Activated CD4-positive, alpha-beta memory T cell treated with anti-CD3 and anti-CD28 coated beads for 36 hours (primary cell): ENCODE measurements at regions of chr14 and their contacts with region 1.

Region 1: GRCh38 chr14:22200977-22201605 is 387.9 kb downstream of the DAD1 start:
- DNase-seq: no peak
- H3K4me3 Mint-ChIP-seq: no peak overlapping the region
- H3K27ac Mint-ChIP-seq: no peak overlapping the region
- H3K4me1 Mint-ChIP-seq: peaks cover 15% of the 10 kb centered on the region
- H3K27me3 Mint-ChIP-seq: no peaks in the 10 kb centered on the region

Region 2: GRCh38 chr14:21894003-21894897 is 306.8 kb before region 1 on chr14:
- CTCF ChIA-PET with region 1: no interaction called
- POLR2A ChIA-PET with region 1: no interaction called
- intact Hi-C with region 1: no loop called
- DNase-seq: peak; percentile 73
- H3K4me3 Mint-ChIP-seq: peak overlapping the region; percentile 80
- H3K27ac Mint-ChIP-seq: peak overlapping the region; percentile 89
- H3K4me1 Mint-ChIP-seq: peaks cover 25% of the 10 kb centered on the region
- H3K27me3 Mint-ChIP-seq: no peaks in the 10 kb centered on the region

Region 3: GRCh38 chr14:22147704-22148103 is 53.4 kb before region 1 on chr14:
- CTCF ChIA-PET with region 1: no interaction called
- POLR2A ChIA-PET with region 1: no interaction called
- intact Hi-C with region 1: no loop called
- DNase-seq: peak; percentile 18
- H3K4me3 Mint-ChIP-seq: peak overlapping the region; percentile 73
- H3K27ac Mint-ChIP-seq: peak overlapping the region; percentile 79
- H3K4me1 Mint-ChIP-seq: peaks cover 3% of the 10 kb centered on the region
- H3K27me3 Mint-ChIP-seq: no peaks in the 10 kb centered on the region

Region 4: DNA sequence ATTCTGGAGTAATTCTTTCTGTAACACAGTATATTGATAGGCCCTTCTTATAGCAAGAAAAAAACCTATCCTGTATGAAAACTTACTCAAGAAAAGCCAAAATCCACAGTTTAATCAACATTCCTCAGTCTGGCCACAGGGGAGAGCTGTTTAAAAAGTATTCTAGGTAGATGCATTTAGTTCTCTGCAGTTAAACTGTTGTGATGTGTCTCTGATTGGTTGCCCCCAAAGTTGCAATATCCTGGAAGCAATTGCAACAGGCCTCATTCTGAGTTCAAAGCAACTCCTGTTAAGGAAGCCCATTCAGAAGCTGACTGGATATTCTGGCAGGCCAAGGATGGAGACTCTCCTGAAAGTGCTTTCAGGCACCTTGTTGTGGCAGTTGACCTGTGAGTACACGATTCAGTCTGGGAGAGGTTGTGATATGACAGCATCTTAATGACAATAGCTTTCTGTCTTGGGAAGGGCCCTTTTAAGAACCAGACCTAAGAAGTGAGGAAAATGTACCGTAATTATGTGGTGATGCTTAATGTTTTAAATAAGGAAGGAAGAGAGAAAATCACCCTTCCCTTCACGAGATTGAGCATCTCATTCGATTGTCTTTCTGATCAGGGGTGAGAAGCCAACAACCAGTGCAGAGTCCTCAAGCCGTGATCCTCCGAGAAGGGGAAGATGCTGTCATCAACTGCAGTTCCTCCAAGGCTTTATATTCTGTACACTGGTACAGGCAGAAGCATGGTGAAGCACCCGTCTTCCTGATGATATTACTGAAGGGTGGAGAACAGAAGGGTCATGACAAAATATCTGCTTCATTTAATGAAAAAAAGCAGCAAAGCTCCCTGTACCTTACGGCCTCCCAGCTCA is 32.8 kb before region 1 on chr14:
- CTCF ChIA-PET with region 1: interaction called, 4 read pairs
- POLR2A ChIA-PET with region 1: no interaction called
- intact Hi-C with region 1: loop called (anchors 2 kb)
- DNase-seq: peak; percentile 15
- H3K4me3 Mint-ChIP-seq: peak overlapping the region; percentile 66
- H3K27ac Mint-ChIP-seq: peak overlapping the region; percentile 58
- H3K4me1 Mint-ChIP-seq: peaks cover 3% of the 10 kb centered on the region
- H3K27me3 Mint-ChIP-seq: no peaks in the 10 kb centered on the region

Region 5: GRCh38 chr14:22177870-22178269 is 23.2 kb before region 1 on chr14:
- CTCF ChIA-PET with region 1: interaction called, 4 read pairs
- POLR2A ChIA-PET with region 1: interaction called, 9 read pairs
- intact Hi-C with region 1: loop called (anchors 1 kb)
- DNase-seq: no peak
- H3K4me3 Mint-ChIP-seq: no peak overlapping the region
- H3K27ac Mint-ChIP-seq: no peak overlapping the region
- H3K4me1 Mint-ChIP-seq: peaks cover 9% of the 10 kb centered on the region
- H3K27me3 Mint-ChIP-seq: no peaks in the 10 kb centered on the region

Region 6: GRCh38 chr14:22221508-22221907 is 20.4 kb after region 1 on chr14:
- CTCF ChIA-PET with region 1: interaction called, 9 read pairs
- POLR2A ChIA-PET with region 1: no interaction called
- intact Hi-C with region 1: loop called (anchors 2 kb)
- DNase-seq: no peak
- H3K4me3 Mint-ChIP-seq: peak overlapping the region; percentile 59
- H3K27ac Mint-ChIP-seq: peak overlapping the region; percentile 56
- H3K4me1 Mint-ChIP-seq: peaks cover 10% of the 10 kb centered on the region
- H3K27me3 Mint-ChIP-seq: no peaks in the 10 kb centered on the region